ENCODE measurements at regions of chr1 and their contacts with region 1.

Region 1: DNA sequence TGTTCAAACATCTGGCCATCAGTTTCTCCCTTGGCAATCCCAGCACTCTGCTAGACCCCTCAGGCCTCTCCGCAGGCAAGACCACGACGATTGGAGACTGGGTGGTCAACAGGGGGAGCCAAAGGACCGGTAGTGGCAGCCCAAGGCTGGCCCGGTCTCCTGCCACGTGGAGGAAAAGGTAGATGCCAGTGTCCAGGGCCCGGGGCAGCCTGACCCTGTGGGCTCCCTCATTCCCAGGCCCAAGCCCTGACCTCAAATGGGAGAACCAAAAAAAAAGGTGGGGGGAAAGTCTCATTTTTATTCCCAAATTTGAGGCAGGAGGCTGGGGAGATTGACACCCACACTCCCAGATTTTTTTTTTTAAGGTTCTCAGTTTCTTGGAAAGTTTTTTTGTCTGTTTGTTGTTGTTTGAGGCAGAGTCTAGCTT is 24.8 kb downstream of the S100A6 start:
- DNase-seq: peak; percentile 87 to 92 (median 89)
- H3K4me3 ChIP-seq: no peak overlapping the region
- H3K27ac ChIP-seq: no peak overlapping the region
- H3K4me1 ChIP-seq: peaks cover 0 to 5% (median 0%) of the 10 kb centered on the region in 3 donors
- H3K27me3 ChIP-seq: no peaks in the 10 kb centered on the region
- CTCF ChIP-seq: peak; percentile 92

Region 2: DNA sequence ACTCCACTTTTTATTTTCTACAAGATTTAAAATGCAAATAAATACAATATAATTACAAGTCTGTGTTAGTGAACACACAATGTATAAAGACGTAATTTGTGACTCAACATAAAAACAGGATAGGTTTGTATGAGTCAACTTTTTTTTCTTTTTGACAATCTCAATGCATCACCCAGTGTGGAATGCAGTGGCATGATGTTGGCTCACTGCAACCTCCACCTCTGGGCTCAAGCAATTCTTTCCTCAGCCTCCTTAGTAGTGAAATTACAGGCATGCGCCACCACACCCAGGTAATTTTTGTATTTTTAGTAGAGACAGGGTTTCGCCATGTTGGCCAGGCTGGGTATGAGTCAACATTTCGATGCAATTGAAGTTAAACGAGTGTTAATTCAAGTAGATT is 410.8 kb before region 1 on chr1:
- intact Hi-C with region 1: no loop called
- DNase-seq: no peak
- H3K4me3 ChIP-seq: no peak overlapping the region
- H3K27ac ChIP-seq: no peak overlapping the region
- H3K4me1 ChIP-seq: no peaks in the 10 kb centered on the region
- H3K27me3 ChIP-seq: no peaks in the 10 kb centered on the region
- CTCF ChIP-seq: no peak

Region 3: GRCh38 chr1:153292740-153293479 is 218.1 kb before region 1 on chr1:
- intact Hi-C with region 1: no loop called
- DNase-seq: no peak
- H3K4me3 ChIP-seq: no peak overlapping the region
- H3K27ac ChIP-seq: no peak overlapping the region
- H3K4me1 ChIP-seq: no peaks in the 10 kb centered on the region
- H3K27me3 ChIP-seq: no peaks in the 10 kb centered on the region
- CTCF ChIP-seq: no peak

Region 4: GRCh38 chr1:153422450-153423068 is 88.4 kb before region 1 on chr1:
- intact Hi-C with region 1: no loop called
- DNase-seq: peak in 4 of 5 donors; percentile 74 to 90 (median 88)
- H3K4me3 ChIP-seq: no peak overlapping the region
- H3K27ac ChIP-seq: no peak overlapping the region
- H3K4me1 ChIP-seq: no peaks in the 10 kb centered on the region
- H3K27me3 ChIP-seq: no peaks in the 10 kb centered on the region
- CTCF ChIP-seq: no peak

Region 5: DNA sequence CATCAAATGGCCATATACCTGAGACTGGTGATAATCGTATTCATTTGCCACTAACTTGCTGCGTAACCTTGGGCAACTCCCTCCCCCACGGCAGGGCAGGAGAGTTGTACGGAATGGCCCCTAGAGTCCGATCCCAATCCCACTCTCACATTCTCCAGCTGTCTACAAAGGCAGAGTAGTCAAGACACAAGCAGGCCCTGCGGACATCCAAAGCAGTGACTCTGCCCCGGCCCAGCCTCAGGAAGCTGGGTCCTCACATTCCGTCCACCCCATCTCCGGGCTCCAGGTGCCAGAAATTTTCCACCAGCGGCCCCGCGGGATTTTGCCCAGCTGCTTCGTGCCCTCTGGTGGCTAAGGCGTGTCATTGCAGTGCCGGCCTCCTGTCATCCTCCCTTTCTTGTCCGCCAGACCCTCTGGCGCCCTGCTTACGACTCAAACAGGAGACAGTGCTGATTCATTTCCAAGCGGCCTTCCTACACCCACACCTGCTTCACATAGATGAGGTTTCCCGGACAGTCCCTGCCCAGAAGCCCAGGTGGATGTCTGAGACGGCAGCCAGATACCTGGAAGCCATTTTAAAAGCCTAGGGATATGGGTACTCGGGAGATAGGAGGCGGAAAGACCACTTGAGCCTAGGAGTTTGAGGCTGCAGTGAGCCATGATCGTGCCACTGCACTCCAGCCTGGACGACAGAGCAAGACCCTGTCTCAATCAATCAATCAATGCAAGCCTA is 57.5 kb after region 1 on chr1:
- intact Hi-C with region 1: loop called (anchors 5 kb)
- DNase-seq: peak; percentile 94 to 95 (median 95)
- H3K4me3 ChIP-seq: peak overlapping the region; percentile 12 to 56 (median 21)
- H3K27ac ChIP-seq: peak overlapping the region; percentile 71 to 74
- H3K4me1 ChIP-seq: peaks cover 6 to 24% (median 19%) of the 10 kb centered on the region in 3 donors
- H3K27me3 ChIP-seq: no peaks in the 10 kb centered on the region
- CTCF ChIP-seq: peak; percentile 99

Region 6: GRCh38 chr1:153990468-153991150 is 479.6 kb after region 1 on chr1 and contains the start of gene RPS27:
- intact Hi-C with region 1: no loop called
- DNase-seq: peak; percentile 94 to 100 (median 96)
- H3K4me3 ChIP-seq: peak within 1 kb of the TSS; percentile 93 to 98 (median 97)
- H3K27ac ChIP-seq: peak within 1 kb of the TSS; percentile 96 to 97
- H3K4me1 ChIP-seq: peaks cover 6 to 20% (median 11%) of the 10 kb centered on the region in 3 donors
- H3K27me3 ChIP-seq: no peaks in the 10 kb centered on the region
- CTCF ChIP-seq: no peak
- total RNA-seq, gene RPS27: 1,447 TPM

Measured in kidney (tissue), 22 donors.